Transverse colon (tissue), 4 donors: ENCODE measurements at regions of chr17 and their contacts with region 1.

Region 1: GRCh38 chr17:44091200-44091997 is 20.9 kb downstream of the G6PC3 start:
- DNase-seq: no peak
- H3K4me3 ChIP-seq: no peak overlapping the region
- H3K27ac ChIP-seq: no peak overlapping the region
- H3K4me1 ChIP-seq: peaks cover 12 to 27% (median 19%) of the 10 kb centered on the region in 4 donors
- H3K27me3 ChIP-seq: no peaks in the 10 kb centered on the region
- CTCF ChIP-seq: no peak
- EP300 ChIP-seq: no peak
- POLR2A ChIP-seq: no peak

Region 2: GRCh38 chr17:44053125-44053872 is 38.1 kb before region 1 on chr17:
- in situ Hi-C with region 1: no loop called
- intact Hi-C with region 1: loop called (anchors 1 kb)
- DNase-seq: no peak
- H3K4me3 ChIP-seq: no peak overlapping the region
- H3K27ac ChIP-seq: peak overlapping the region in 1 of 4 donors; percentile 4
- H3K4me1 ChIP-seq: peaks cover 0 to 6% (median 0%) of the 10 kb centered on the region in 4 donors
- H3K27me3 ChIP-seq: no peaks in the 10 kb centered on the region
- CTCF ChIP-seq: no peak
- EP300 ChIP-seq: no peak
- POLR2A ChIP-seq: no peak